Endothelial cell of umbilical vein (primary cell): ENCODE measurements at regions of chr5 and their contacts with region 1.

Region 1: GRCh38 chr5:134145779-134146581 is 30.8 kb downstream of the SKP1 start:
- DNase-seq: peak; percentile 69
- H3K4me3 ChIP-seq: no peak overlapping the region
- H3K27ac ChIP-seq: no peak overlapping the region
- H3K4me1 ChIP-seq: no peaks in the 10 kb centered on the region
- H3K27me3 ChIP-seq: no peaks in the 10 kb centered on the region
- CTCF ChIP-seq: peak; percentile 83 to 93
- POLR2A ChIP-seq: no peak

Region 2: DNA sequence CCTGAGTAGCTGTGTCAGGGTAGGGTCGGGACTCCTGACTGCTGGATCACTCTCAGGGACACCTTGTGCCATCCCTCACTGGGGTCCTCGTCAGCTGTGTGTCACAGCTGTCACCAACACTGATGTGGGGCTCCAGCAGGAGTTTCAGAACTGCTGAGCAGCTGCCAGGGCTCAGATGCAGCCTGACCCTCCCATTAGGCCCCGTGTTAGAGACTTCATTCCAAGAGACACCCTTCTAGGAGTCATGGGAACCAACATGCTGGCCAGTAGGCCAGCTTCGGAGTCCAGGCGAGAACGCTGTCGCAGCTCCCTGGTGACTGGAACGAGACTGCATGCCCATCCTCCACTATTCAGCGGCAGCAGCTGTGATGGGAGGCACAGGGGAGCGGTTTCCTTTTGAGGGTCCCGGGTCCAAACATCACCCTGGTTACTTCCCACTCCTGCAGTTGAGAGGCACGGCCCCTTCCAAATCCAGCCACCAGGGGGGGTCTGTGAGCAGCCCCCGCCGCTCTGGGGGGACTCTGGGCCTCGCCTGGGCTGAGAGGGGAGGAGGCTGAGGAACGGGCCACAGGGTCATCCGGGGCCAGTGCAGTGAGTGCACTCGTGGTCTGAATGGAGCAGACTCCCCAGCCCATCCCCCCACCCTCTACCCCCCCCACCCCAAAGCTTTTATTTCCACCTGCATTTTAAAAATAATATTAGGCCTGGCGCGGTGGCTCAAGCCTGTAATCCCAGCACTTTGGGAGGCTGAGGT is 44.1 kb before region 1 on chr5:
- CTCF ChIA-PET with region 1: interaction called, 132 read pairs
- POLR2A ChIA-PET with region 1: no interaction called
- dilution Hi-C with region 1: no loop called
- intact Hi-C with region 1: no loop called
- DNase-seq: peak; percentile 48
- H3K4me3 ChIP-seq: no peak overlapping the region
- H3K27ac ChIP-seq: no peak overlapping the region
- H3K4me1 ChIP-seq: no peaks in the 10 kb centered on the region
- H3K27me3 ChIP-seq: peaks cover 0 to under 1% of the 10 kb centered on the region in 2 experiments
- CTCF ChIP-seq: peak; percentile 85 to 97
- POLR2A ChIP-seq: no peak

Region 3: DNA sequence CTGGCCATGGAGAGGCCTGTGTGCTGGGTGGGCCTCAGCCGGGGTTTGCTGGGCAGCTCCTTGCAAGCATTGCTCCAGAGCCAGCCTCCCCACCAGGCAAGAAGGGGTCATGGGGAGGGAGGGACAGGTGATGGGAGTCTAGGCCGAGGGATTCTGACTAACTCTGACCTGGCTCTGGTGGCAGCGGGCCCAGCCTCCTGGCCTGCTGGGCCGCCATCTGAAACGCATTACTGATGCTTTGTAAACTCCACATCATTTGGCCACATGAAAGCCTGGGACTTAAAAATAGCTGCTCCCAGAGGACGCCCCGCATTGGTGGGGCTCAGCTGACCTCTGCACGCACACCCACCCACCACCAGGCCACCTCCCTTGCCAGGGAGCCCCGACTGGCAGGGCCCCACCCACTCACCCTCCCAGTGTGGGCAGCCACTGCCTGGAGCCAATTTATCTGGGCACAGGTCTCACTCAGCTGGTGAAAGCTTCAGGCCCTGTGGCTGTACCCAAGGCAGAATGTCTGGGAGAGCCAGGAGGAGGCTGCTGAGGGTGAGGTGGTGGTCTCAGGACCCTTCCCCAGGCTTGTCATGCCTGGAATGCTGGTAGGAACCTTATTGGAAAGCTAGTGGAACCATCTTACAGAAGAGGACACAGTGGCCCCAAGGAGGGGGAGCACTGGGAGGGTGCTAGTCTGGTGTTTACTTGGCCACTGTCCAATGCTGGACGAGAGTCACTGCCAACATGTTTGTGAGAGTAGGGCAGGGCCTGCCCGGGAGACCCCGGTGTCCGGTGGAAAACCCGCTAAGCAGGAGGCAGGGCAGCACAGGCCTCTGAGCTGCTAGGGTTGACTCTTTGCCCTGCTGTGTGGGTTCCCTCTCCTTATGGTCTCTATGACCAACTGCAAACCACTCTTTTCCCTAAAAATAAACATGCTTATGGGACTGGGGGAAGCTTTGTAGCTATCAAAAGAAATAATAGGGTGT is 20.7 kb before region 1 on chr5:
- CTCF ChIA-PET with region 1: interaction called, 50 read pairs
- POLR2A ChIA-PET with region 1: no interaction called
- dilution Hi-C with region 1: no loop called
- intact Hi-C with region 1: no loop called
- DNase-seq: peak; percentile 51
- H3K4me3 ChIP-seq: no peak overlapping the region
- H3K27ac ChIP-seq: no peak overlapping the region
- H3K4me1 ChIP-seq: peaks cover 9% of the 10 kb centered on the region
- H3K27me3 ChIP-seq: no peaks in the 10 kb centered on the region
- CTCF ChIP-seq: no peak
- POLR2A ChIP-seq: no peak

Region 4: GRCh38 chr5:134255418-134256175 is 109.6 kb after region 1 on chr5:
- CTCF ChIA-PET with region 1: no interaction called
- POLR2A ChIA-PET with region 1: no interaction called
- dilution Hi-C with region 1: no loop called
- intact Hi-C with region 1: no loop called
- DNase-seq: peak; percentile 61
- H3K4me3 ChIP-seq: no peak overlapping the region
- H3K27ac ChIP-seq: no peak overlapping the region
- H3K4me1 ChIP-seq: peaks cover 8% of the 10 kb centered on the region
- H3K27me3 ChIP-seq: peaks cover 4 to 5% of the 10 kb centered on the region in 2 experiments
- CTCF ChIP-seq: no peak
- POLR2A ChIP-seq: no peak

Region 5: GRCh38 chr5:134312796-134313195 is 166.8 kb after region 1 on chr5:
- CTCF ChIA-PET with region 1: no interaction called
- POLR2A ChIA-PET with region 1: no interaction called
- dilution Hi-C with region 1: no loop called
- intact Hi-C with region 1: no loop called
- DNase-seq: no peak
- H3K4me3 ChIP-seq: no peak overlapping the region
- H3K27ac ChIP-seq: no peak overlapping the region
- H3K4me1 ChIP-seq: no peaks in the 10 kb centered on the region
- H3K27me3 ChIP-seq: no peaks in the 10 kb centered on the region
- CTCF ChIP-seq: no peak
- POLR2A ChIP-seq: no peak

Region 6: GRCh38 chr5:134493461-134494055 is 347.6 kb after region 1 on chr5:
- CTCF ChIA-PET with region 1: no interaction called
- POLR2A ChIA-PET with region 1: no interaction called
- dilution Hi-C with region 1: no loop called
- intact Hi-C with region 1: no loop called
- DNase-seq: no peak
- H3K4me3 ChIP-seq: no peak overlapping the region
- H3K27ac ChIP-seq: no peak overlapping the region
- H3K4me1 ChIP-seq: no peaks in the 10 kb centered on the region
- H3K27me3 ChIP-seq: no peaks in the 10 kb centered on the region
- CTCF ChIP-seq: no peak
- POLR2A ChIP-seq: no peak